Esophagus muscularis mucosa (tissue), 4 donors: ENCODE measurements at regions of chr20 and their contacts with region 1.

Region 1: GRCh38 chr20:49508435-49509199 is 26.1 kb upstream of the KCNB1 start:
- DNase-seq: no peak
- H3K4me3 ChIP-seq: no peak overlapping the region
- H3K27ac ChIP-seq: peak overlapping the region; percentile 44 to 86 (median 69)
- H3K4me1 ChIP-seq: peaks cover 0 to 50% (median 44%) of the 10 kb centered on the region in 4 donors
- H3K27me3 ChIP-seq: no peaks in the 10 kb centered on the region
- CTCF ChIP-seq: peak; percentile 53 to 65 (median 59)
- EP300 ChIP-seq: no peak
- POLR2A ChIP-seq: no peak

Region 2: DNA sequence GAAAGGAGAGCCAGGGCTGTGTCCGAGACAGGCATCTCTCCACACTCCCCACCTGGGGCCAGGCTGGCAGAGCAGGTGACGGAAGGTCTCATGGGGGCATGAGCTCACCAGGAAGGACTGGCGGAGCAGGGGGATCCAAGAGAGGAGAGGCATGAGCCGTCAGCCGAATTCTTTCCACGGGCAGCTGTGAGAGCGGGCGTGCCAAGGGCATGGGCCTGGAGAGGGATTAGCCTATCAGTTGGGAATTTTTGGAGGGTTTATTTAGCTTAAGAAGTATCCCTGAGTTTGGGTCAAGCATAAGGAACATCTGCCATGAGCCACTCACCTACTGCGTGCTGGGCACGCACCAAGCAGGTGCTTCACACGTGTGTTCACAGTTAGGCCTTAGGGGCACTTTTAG is 170.6 kb before region 1 on chr20:
- intact Hi-C with region 1: loop called (anchors 1 kb)
- DNase-seq: no peak
- H3K4me3 ChIP-seq: no peak overlapping the region
- H3K27ac ChIP-seq: no peak overlapping the region
- H3K4me1 ChIP-seq: peaks cover 0 to 37% (median 22%) of the 10 kb centered on the region in 4 donors
- H3K27me3 ChIP-seq: no peaks in the 10 kb centered on the region
- CTCF ChIP-seq: no peak
- EP300 ChIP-seq: no peak
- POLR2A ChIP-seq: no peak